ENCODE measurements at regions of chr1 and their contacts with region 1.

Region 1: DNA sequence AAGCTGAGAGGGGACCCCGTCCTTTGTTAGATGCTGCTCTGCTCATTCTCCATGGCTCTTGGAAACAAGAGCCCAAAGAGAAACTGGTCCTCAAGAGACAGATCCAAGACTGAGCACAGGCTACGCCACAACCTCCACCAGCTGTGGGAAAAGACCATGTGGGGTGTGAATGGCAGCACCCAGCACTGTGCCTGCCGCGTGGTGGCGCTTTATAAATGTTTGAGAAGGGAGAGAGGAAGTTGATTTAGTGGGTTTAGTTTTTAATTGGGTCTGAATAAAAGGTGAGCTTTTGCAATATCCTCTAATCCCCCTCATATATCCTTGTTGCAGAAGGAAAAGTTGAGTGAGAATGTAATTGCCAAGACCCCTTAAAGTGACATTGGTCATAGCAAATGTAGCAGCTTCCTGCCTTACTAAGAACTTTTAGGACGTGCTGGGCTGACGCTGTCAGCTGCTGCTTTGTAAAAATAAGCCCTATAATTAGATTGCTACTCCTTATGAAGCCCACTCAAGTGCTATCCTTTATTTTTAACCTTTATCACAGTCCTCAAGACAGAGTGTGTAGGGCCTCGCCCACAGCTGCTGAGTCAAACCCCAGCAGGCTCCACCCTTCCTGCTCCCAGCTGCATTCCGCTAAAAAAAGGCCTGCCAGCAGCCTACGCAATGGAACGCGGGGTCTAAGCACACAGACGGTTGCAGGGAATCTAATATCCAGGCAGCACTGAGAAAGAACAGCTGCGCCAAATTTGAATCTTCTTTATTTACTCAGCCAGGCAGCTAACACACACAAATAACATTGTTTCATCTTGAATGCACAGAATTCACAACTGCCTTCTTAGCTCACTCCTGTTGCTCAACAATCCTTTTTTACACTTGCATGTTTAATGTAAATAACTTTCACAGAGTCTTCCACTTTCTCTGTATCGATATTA is 47.4 kb upstream of the PRDX6 start:
- DNase-seq: peak; percentile 73 to 80 (median 77)
- ATAC-seq: peak; percentile 83 to 96 (median 88)
- H3K4me3 ChIP-seq: peak overlapping the region in 1 of 3 donors; percentile 3
- H3K27ac ChIP-seq: peak overlapping the region; percentile 52 to 69 (median 54)
- H3K4me1 ChIP-seq: no peaks in the 10 kb centered on the region
- H3K27me3 ChIP-seq: no peaks in the 10 kb centered on the region
- CTCF ChIP-seq: peak; percentile 40 to 55 (median 47)
- POLR2A ChIP-seq: no peak

Region 2: GRCh38 chr1:173476664-173477285 is 47.0 kb after region 1 on chr1:
- intact Hi-C with region 1: no loop called
- DNase-seq: peak; percentile 96 to 98 (median 97)
- ATAC-seq: peak; percentile 79 to 90 (median 82)
- H3K4me3 ChIP-seq: peak overlapping the region; percentile 72 to 87 (median 75)
- H3K27ac ChIP-seq: peak overlapping the region; percentile 82 to 99 (median 93)
- H3K4me1 ChIP-seq: peaks cover 3 to 65% (median 26%) of the 10 kb centered on the region in 4 donors
- H3K27me3 ChIP-seq: no peaks in the 10 kb centered on the region
- CTCF ChIP-seq: peak in 1 of 4 donors; percentile 31
- POLR2A ChIP-seq: peak; percentile 74

Region 3: DNA sequence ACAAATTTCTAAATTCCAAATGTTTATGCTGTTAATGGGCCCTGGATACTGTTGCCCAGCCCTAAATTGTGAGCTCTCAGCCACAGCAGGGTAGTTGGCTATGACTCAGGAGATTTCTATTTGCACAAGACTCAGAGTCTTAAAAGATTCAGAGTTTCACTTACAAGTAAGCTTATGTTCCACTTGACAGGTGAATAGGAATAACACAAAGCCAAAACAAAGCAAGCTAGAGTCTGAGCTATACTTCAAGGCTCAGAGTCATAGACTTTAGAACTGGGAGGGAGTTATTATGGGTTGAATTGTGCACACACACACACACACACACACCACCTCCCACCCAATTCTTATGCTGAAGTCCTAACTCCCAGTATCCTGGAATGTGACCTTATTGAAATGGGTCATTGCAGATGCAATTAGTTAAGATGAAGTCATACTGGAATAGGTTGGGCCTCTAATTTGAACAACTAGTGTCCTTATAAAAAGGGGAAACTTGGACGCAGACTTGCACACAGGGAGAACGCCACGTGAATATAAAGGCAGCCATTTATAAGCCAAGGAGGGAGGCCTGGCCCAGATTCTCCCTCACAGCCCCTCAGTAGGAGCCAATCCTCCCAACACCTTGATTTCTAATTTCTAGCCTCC is 77.6 kb after region 1 on chr1:
- intact Hi-C with region 1: loop called in 1 of 2 experiments (anchors 10 kb)
- DNase-seq: no peak
- ATAC-seq: no peak
- H3K4me3 ChIP-seq: no peak overlapping the region
- H3K27ac ChIP-seq: no peak overlapping the region
- H3K4me1 ChIP-seq: peaks cover 0 to 22% (median 3%) of the 10 kb centered on the region in 4 donors
- H3K27me3 ChIP-seq: no peaks in the 10 kb centered on the region
- CTCF ChIP-seq: no peak
- POLR2A ChIP-seq: no peak

Region 4: GRCh38 chr1:173527151-173527826 is 97.6 kb after region 1 on chr1:
- intact Hi-C with region 1: no loop called
- DNase-seq: peak; percentile 40 to 79 (median 60)
- ATAC-seq: peak; percentile 80 to 93 (median 88)
- H3K4me3 ChIP-seq: no peak overlapping the region
- H3K27ac ChIP-seq: peak overlapping the region in 2 of 3 donors; percentile 70 to 71
- H3K4me1 ChIP-seq: peaks cover 0 to 31% (median 10%) of the 10 kb centered on the region in 4 donors
- H3K27me3 ChIP-seq: no peaks in the 10 kb centered on the region
- CTCF ChIP-seq: no peak
- POLR2A ChIP-seq: no peak